Activated B cell treated with CpG ODN at 0.5 μM for 24 hours (primary cell): ENCODE measurements at regions of chr7 and their contacts with region 1.

Region 1: GRCh38 chr7:18520450-18521235 is 25.1 kb downstream of the HDAC9 start:
- DNase-seq: no peak
- ATAC-seq: peak; percentile 86
- H3K4me3 Mint-ChIP-seq: peak overlapping the region; percentile 78
- H3K27ac Mint-ChIP-seq: peak overlapping the region; percentile 97
- H3K4me1 Mint-ChIP-seq: peaks cover 82% of the 10 kb centered on the region
- H3K27me3 Mint-ChIP-seq: no peaks in the 10 kb centered on the region
- CTCF ChIP-seq: no peak

Region 2: DNA sequence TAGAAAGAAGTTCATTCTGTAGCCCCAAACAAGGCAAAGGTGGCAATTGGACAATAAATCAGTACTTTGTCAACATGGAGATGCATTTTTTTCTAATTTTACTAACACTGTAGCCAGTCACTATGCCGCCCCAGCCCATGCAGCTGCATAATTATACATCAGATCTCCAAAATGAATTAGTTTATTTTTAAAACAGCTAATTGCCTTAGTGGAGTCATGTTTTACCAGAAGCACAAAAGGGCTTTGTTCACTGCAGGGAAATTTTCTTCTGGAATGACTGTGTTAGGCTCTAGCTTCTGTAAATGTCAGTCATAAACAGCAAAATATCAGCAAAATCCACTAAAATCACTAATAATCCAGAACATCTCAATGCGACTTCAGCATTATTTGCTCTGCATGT is 45.2 kb before region 1 on chr7:
- CTCF ChIA-PET with region 1: no interaction called
- POLR2A ChIA-PET with region 1: interaction called, 12 read pairs
- intact Hi-C with region 1: no loop called
- DNase-seq: no peak
- ATAC-seq: no peak
- H3K4me3 Mint-ChIP-seq: no peak overlapping the region
- H3K27ac Mint-ChIP-seq: no peak overlapping the region
- H3K4me1 Mint-ChIP-seq: peaks cover 6% of the 10 kb centered on the region
- H3K27me3 Mint-ChIP-seq: no peaks in the 10 kb centered on the region
- CTCF ChIP-seq: no peak

Region 3: GRCh38 chr7:18503126-18503866 is 17.3 kb before region 1 on chr7:
- CTCF ChIA-PET with region 1: no interaction called
- POLR2A ChIA-PET with region 1: interaction called, 139 read pairs
- intact Hi-C with region 1: no loop called
- DNase-seq: no peak
- ATAC-seq: peak; percentile 35
- H3K4me3 Mint-ChIP-seq: peak overlapping the region; percentile 67
- H3K27ac Mint-ChIP-seq: peak overlapping the region; percentile 91
- H3K4me1 Mint-ChIP-seq: peaks cover 87% of the 10 kb centered on the region
- H3K27me3 Mint-ChIP-seq: no peaks in the 10 kb centered on the region
- CTCF ChIP-seq: no peak

Region 4: DNA sequence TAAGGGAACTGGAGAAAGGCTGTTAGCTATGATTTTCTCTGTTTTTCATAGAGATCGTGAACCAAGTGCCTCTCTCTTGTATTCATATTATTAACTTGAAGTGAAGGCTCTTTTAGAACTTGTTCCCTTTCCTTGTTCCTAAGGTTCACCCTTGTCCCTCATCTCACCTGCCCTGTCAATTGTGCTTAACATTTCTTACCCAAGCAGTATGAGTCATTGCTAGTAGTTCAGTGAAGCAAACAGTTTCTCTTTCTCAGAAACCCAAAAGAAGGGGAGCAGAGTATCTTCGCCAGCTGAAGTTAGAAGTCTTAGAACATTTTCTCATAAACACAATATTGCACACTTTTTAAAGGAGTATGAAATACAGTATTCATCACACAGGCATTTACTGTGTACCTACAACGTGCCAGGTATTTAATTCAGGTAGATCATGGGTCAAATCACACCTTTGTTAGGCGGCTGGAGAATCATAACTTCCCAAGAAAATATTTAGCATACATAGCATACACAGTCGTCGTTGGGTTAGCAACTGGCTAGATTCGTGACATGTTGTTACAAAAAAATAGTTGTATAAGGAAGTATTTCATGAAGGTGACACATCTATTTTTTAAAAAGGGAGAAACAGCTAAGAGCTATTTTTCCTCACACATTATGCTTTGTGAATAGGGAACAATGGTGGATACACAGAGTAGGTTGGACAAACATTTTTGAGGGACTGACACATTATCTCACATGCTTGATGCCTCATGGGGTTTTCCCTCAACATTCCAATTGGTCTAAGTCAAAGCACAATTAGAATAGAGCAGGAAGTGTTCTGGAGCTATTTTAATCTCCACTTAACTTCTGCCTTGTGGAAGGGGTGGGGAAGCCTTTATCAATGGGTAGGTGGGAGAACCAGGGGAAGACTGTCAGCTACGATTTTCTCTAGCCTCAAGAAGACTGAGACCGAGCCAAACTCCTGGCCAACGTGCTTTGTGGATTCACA is 11.9 kb before region 1 on chr7:
- CTCF ChIA-PET with region 1: interaction called, 6 read pairs
- POLR2A ChIA-PET with region 1: interaction called, 139 read pairs
- intact Hi-C with region 1: loop called (anchors 1 kb)
- DNase-seq: no peak
- ATAC-seq: peak; percentile 74
- H3K4me3 Mint-ChIP-seq: peak overlapping the region; percentile 82
- H3K27ac Mint-ChIP-seq: peak overlapping the region; percentile 99
- H3K4me1 Mint-ChIP-seq: peaks cover 89% of the 10 kb centered on the region
- H3K27me3 Mint-ChIP-seq: no peaks in the 10 kb centered on the region
- CTCF ChIP-seq: no peak

Region 5: DNA sequence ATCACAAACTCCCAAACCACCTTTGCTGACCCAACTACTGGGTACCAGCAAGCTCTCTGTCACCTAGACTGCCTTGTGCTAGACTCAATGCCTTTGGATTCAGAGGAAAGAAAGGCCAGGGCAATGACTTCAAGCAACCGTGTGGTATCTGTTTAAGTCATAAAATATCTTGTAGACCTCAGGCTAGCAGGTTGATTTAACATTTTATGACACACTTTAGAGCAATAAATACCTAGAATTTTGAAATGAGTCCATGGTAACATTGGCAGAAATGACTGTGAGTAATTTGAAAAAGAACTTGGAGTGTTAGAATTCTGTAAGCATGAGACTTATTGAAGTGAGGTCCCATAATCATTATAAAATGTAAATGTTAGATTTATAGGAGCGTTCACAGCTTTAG is 509.6 kb after region 1 on chr7:
- CTCF ChIA-PET with region 1: no interaction called
- POLR2A ChIA-PET with region 1: no interaction called
- intact Hi-C with region 1: no loop called
- DNase-seq: no peak
- ATAC-seq: no peak
- H3K4me3 Mint-ChIP-seq: no peak overlapping the region
- H3K27ac Mint-ChIP-seq: no peak overlapping the region
- H3K4me1 Mint-ChIP-seq: no peaks in the 10 kb centered on the region
- H3K27me3 Mint-ChIP-seq: no peaks in the 10 kb centered on the region
- CTCF ChIP-seq: no peak

Region 6: GRCh38 chr7:19677180-19677579 is 1156.5 kb after region 1 on chr7:
- CTCF ChIA-PET with region 1: no interaction called
- POLR2A ChIA-PET with region 1: no interaction called
- intact Hi-C with region 1: no loop called
- DNase-seq: no peak
- ATAC-seq: peak; percentile 14
- H3K4me3 Mint-ChIP-seq: no peak overlapping the region
- H3K27ac Mint-ChIP-seq: no peak overlapping the region
- H3K4me1 Mint-ChIP-seq: peaks cover 15% of the 10 kb centered on the region
- H3K27me3 Mint-ChIP-seq: no peaks in the 10 kb centered on the region
- CTCF ChIP-seq: no peak